Activated naive CD4-positive, alpha-beta T cell treated with anti-CD3 and anti-CD28 coated beads for 36 hours (primary cell): ENCODE measurements at regions of chr6 and their contacts with region 1.

Region 1: DNA sequence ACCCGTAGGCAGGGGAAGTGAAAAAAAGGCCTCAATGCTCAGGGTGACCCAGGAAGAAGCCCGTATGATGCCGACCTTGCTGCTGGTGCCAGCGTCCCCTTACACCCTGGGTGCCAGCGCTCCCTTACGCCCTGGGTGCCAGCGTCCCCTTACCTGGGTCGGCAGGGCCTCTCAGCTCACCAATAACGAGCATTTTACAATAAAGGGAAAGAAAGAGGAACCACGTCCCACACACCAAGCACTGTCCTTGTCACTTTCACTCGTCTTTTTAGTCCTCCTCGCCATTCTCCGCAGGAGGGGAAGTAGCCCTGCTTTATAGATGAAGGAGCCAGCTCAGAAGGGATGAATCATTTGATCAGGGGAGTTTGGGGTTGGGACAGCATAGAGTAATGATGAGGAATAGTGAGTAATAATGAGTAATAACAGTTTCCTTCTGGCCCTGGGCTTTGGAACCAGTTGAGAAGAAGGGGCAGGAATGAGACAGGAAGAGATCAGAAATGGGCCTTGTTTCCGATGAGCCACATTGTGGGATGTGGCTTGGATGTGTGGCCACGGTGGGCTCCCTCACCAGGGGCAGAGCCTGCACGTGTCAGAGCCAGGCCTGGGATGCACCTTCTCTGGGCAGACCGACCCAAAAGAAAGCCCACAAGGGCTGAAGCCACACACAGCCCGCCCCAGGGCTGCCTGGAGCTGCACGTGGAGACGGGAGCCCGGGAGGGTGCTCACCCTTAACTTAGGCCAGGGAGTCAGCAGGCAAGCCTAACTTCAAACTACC is 75.7 kb downstream of the SYNJ2 start:
- DNase-seq: peak; percentile 77
- H3K4me3 Mint-ChIP-seq: no peak overlapping the region
- H3K27ac Mint-ChIP-seq: peak overlapping the region; percentile 25
- H3K4me1 Mint-ChIP-seq: peaks cover 54% of the 10 kb centered on the region
- H3K27me3 Mint-ChIP-seq: no peaks in the 10 kb centered on the region

Region 2: GRCh38 chr6:158047127-158047518 is 10.3 kb before region 1 on chr6:
- CTCF ChIA-PET with region 1: interaction called, 4 read pairs
- intact Hi-C with region 1: loop called (anchors 1 kb)
- DNase-seq: peak; percentile 91
- H3K4me3 Mint-ChIP-seq: peak overlapping the region; percentile 2
- H3K27ac Mint-ChIP-seq: peak overlapping the region; percentile 73
- H3K4me1 Mint-ChIP-seq: peaks cover 25% of the 10 kb centered on the region
- H3K27me3 Mint-ChIP-seq: no peaks in the 10 kb centered on the region